Gastrocnemius medialis (tissue), 4 donors: ENCODE measurements at regions of chr14 and their contacts with region 1.

Region 1: GRCh38 chr14:99480917-99481744 is at the start of gene CCNK:
- DNase-seq: peak; percentile 100
- ATAC-seq: peak; percentile 85 to 87
- H3K4me3 ChIP-seq: peak within 1 kb of the TSS; percentile 89 to 100 (median 94)
- H3K27ac ChIP-seq: peak within 1 kb of the TSS; percentile 92 to 98 (median 95)
- H3K4me1 ChIP-seq: peaks cover 42 to 60% of the 10 kb centered on the region in 2 donors
- H3K27me3 ChIP-seq: no peaks in the 10 kb centered on the region
- CTCF ChIP-seq: peak in 1 of 5 experiments; percentile 12
- POLR2A ChIP-seq: peak; percentile 92 to 96
- total RNA-seq, gene CCNK: 15.0 to 35.3 (median 19.1) TPM

Region 2: DNA sequence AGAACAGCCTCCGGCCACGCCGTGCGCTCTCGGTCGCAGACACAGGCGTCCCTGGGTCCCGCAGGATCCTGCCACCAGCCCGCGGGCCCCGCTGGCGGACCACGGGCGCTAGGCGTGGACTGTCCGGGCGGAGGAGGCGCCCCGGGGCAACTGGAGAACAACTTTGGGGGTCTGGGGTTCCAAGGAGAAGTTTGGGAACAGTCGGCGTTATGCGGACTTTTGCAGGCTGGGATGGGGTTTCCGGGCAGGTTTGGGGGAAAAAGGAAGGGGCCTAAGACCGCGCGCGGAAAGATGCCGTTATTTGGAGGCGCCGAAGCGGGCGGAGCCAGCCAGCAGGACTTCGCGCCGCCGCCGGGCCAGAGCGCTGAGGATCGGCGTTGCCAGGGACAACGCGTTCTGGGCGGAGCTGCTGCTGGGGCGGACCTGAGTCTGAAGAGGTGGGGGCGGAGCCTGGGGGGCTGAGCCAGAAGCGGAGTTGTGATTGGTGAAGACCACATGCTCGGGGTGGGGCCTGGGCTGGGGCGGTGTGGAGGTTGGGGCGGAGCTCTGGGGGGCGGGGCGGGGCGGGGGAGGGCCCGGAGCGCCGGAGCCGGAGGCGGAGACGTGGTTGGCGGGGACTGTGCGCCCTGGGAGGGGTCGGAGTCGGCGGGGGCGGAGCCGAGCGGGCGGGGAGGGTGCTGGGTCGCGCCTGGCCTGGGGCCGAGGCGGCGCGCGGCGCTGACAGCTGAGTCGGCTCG is 202.7 kb after region 1 on chr14 and contains the start of gene CYP46A1:
- in situ Hi-C with region 1: no loop called
- intact Hi-C with region 1: loop called (anchors 1 kb)
- DNase-seq: peak; percentile 100
- ATAC-seq: peak; percentile 87 to 94
- H3K4me3 ChIP-seq: peak within 1 kb of the TSS; percentile 82 to 99 (median 90)
- H3K27ac ChIP-seq: peak within 1 kb of the TSS; percentile 75 to 90 (median 88)
- H3K4me1 ChIP-seq: peaks cover 7 to 11% of the 10 kb centered on the region in 2 donors
- H3K27me3 ChIP-seq: no peaks in the 10 kb centered on the region
- CTCF ChIP-seq: peak in 1 of 5 experiments; percentile 18
- POLR2A ChIP-seq: no peak
- total RNA-seq, gene CYP46A1: 0.18 to 2.2 (median 0.45) TPM